Mammary epithelial cell (primary cell): ENCODE measurements at regions of chr19 and their contacts with region 1.

Region 1: DNA sequence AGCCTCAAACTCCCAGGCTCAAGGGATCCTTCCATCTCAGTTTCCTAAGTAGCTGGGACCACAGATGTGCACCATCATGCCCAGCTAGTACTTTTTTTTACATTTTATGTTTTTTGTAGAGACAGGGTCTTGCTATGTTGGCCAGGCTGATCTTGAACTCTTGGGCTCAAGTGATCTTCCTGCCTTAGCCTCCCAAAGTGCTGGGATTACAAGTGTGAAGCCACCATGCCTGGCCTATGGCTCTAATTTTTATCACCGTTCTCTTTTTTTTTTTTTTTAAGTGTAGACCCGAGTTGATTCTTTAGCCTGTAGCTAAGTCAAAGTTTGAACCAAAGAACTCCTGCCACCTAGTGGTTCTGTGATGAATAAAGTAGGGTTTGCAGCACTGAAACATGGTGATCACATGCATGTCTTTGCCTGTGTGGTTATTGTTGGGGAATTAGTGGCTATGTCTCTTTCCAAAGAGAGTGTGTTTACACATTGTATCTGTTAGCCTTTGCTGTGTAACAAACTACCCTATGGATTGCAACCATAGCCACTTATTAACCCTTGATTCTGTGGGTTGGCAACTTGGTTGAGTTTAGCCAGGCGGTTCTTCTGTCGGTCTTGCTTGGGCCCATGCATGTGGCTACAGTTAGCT is 11.6 kb downstream of the NFILZ start:
- DNase-seq: peak; percentile 32
- H3K4me3 ChIP-seq: no peak overlapping the region
- H3K27ac ChIP-seq: no peak overlapping the region
- H3K4me1 ChIP-seq: no peaks in the 10 kb centered on the region
- H3K27me3 ChIP-seq: no peaks in the 10 kb centered on the region
- CTCF ChIP-seq: peak; percentile 34 to 47

Region 2: DNA sequence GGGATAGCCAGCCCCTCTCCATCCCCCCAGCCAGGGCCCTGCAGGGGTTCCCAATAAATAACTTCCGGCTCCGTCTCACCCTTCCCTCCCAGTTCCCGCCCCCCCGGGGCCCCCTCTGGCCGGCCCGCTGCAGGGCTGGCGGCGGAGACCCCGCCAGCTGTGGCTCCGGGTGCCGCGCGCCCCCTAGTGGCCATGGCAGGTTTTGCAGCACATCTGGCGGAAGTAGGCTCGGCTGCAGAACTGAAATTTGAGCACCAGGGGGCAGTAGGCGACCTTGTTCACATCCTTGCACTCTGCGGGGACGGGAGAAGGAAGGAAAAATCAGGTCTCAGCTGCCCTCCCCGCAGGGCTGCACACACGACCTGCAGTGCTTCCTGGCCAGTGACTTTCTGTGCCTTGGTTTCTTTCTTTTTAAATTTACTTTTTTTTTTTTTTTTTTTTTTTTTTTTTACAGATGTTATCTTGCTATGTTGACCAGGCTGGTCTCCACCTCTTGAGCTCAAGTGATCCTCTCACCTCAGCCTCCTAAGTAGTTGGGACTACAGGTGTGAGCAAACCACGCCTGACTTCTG is 61.2 kb before region 1 on chr19:
- CTCF ChIA-PET with region 1: interaction called, 10 read pairs
- dilution Hi-C with region 1: no loop called
- in situ Hi-C with region 1: no loop called
- intact Hi-C with region 1: no loop called
- DNase-seq: peak; percentile 42
- H3K4me3 ChIP-seq: no peak overlapping the region
- H3K27ac ChIP-seq: no peak overlapping the region
- H3K4me1 ChIP-seq: no peaks in the 10 kb centered on the region
- H3K27me3 ChIP-seq: no peaks in the 10 kb centered on the region
- CTCF ChIP-seq: peak; percentile 97 to 99

Region 3: GRCh38 chr19:8592231-8593009 is 49.6 kb before region 1 on chr19:
- CTCF ChIA-PET with region 1: no interaction called
- dilution Hi-C with region 1: no loop called
- in situ Hi-C with region 1: no loop called
- intact Hi-C with region 1: no loop called
- DNase-seq: peak; percentile 25
- H3K4me3 ChIP-seq: no peak overlapping the region
- H3K27ac ChIP-seq: no peak overlapping the region
- H3K4me1 ChIP-seq: no peaks in the 10 kb centered on the region
- H3K27me3 ChIP-seq: no peaks in the 10 kb centered on the region
- CTCF ChIP-seq: no peak

Region 4: GRCh38 chr19:9461938-9462337 is 819.9 kb after region 1 on chr19:
- CTCF ChIA-PET with region 1: no interaction called
- dilution Hi-C with region 1: loop called (anchors 10 kb)
- in situ Hi-C with region 1: no loop called
- intact Hi-C with region 1: no loop called
- DNase-seq: no peak
- H3K4me3 ChIP-seq: no peak overlapping the region
- H3K27ac ChIP-seq: no peak overlapping the region
- H3K4me1 ChIP-seq: no peaks in the 10 kb centered on the region
- H3K27me3 ChIP-seq: no peaks in the 10 kb centered on the region
- CTCF ChIP-seq: no peak